Heart right ventricle (tissue), 16 donors: ENCODE measurements at regions of chr15 and their contacts with region 1.

Region 1: DNA sequence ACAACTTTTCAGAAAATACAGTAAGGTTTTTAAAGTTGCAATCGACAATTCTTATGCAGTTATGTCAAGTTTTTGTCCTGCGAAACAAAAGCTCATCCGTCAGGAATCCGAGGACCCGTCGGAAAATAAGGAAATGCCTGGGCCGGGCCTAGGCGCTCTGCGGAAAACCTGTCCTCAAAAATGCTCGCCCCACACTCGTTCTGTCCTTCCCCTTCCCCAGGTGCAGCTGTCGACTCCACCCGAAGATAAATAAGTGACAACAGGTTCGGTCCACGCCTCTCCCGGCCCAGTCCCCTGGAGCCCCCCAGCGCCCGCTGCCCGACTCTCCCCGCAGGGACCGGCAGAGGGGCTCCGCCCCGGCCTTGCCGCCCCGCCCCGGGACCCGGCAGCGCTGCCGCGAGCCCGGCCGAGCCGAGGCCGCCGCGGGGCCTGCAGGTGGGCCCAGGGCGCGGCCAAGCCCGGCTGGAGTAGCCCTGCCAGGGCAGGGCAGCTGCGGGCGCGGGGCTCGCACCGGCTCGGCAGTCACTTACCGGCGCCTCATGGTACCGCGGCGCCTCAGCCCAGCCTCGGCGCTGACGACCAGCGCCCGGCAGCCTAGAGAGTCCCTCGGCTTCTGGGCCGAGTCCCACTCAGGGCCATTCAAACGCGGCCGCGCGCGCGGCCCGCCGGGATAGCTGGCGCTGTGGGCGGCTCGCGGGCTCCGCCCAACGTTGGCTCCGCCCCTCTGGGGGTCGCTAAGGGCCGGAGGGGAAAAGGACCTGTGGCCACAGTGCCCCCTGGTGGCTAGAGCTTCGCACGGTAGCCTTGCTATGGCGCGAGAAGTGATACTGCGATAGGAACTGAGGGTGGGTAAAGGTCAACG is at the start of gene KATNBL1:
- DNase-seq: peak; percentile 97 to 99
- ATAC-seq: peak; percentile 99 to 100 (median 100)
- H3K4me3 ChIP-seq: peak within 1 kb of the TSS; percentile 46 to 90 (median 68)
- H3K27ac ChIP-seq: peak within 1 kb of the TSS; percentile 5 to 90 (median 82)
- H3K4me1 ChIP-seq: peaks cover 7 to 25% (median 13%) of the 10 kb centered on the region in 9 donors
- H3K27me3 ChIP-seq: no peaks in the 10 kb centered on the region
- CTCF ChIP-seq: peak; percentile 92 to 98 (median 96)
- total RNA-seq, gene KATNBL1: 11.5 to 20.2 (median 17.4) TPM

Region 2: GRCh38 chr15:33476076-33476475 is 733.6 kb before region 1 on chr15:
- intact Hi-C with region 1: no loop called
- DNase-seq: no peak
- ATAC-seq: no peak
- H3K4me3 ChIP-seq: no peak overlapping the region
- H3K27ac ChIP-seq: no peak overlapping the region
- H3K4me1 ChIP-seq: no peaks in the 10 kb centered on the region
- H3K27me3 ChIP-seq: no peaks in the 10 kb centered on the region
- CTCF ChIP-seq: no peak

Region 3: DNA sequence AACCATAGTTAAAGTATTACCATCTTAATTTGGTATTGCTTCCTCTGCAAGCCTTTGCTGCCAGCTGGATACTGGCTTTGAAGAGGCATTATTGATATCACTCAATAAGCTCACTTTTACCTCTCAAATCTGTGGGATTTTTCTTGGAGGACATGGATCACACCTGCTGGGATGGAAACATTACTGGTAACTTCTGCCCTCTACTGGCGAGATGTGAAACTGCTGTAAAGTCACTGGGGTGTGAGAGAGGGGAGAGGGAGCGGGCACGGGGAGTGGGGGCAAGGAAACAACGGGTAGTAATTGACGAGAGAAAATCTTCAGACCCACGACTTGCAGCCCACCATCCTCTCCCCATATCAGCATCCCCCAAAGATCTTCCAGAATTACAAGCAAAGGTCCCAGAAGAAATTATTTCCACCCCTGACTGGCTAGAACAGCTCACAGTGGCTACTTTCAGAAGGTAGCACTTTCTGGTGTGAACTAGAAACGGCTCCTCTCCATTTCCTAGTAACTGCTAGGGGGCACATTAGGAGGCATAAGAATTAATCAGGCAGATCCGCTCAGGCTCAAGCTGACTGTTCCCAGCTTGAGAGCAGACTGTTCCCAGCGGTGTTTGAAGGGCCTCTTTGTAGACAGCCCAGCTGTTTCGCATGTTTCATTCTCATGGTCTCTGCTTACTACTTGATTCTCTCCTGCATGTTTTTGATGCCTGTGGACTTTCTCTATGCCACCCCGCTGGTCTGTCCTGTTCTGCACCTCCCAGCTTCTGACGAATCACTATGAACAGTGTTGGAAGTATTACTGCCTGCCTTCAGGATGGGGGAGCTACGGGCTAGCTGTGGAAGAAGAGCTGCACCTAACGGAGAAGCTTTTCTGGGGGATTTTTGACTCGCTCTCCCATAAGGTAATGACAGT is 471.7 kb before region 1 on chr15:
- intact Hi-C with region 1: no loop called
- DNase-seq: peak in 1 of 2 donors; percentile 14
- ATAC-seq: peak in 2 of 8 donors; percentile 55 to 59
- H3K4me3 ChIP-seq: no peak overlapping the region
- H3K27ac ChIP-seq: no peak overlapping the region
- H3K4me1 ChIP-seq: peaks cover 0 to 5% (median 0%) of the 10 kb centered on the region in 9 donors
- H3K27me3 ChIP-seq: peaks cover 0 to 6% (median 0%) of the 10 kb centered on the region in 7 donors
- CTCF ChIP-seq: peak; percentile 49 to 79 (median 70)

Region 4: GRCh38 chr15:34056936-34057335 is 152.7 kb before region 1 on chr15:
- intact Hi-C with region 1: loop called (anchors 1 to 5 kb)
- DNase-seq: no peak
- ATAC-seq: no peak
- H3K4me3 ChIP-seq: no peak overlapping the region
- H3K27ac ChIP-seq: peak overlapping the region in 4 of 10 donors; percentile 29 to 70 (median 45)
- H3K4me1 ChIP-seq: peaks cover 0 to 9% (median 0%) of the 10 kb centered on the region in 9 donors
- H3K27me3 ChIP-seq: no peaks in the 10 kb centered on the region
- CTCF ChIP-seq: no peak

Region 5: GRCh38 chr15:34065941-34066340 is 143.7 kb before region 1 on chr15:
- intact Hi-C with region 1: loop called (anchors 1 to 5 kb)
- DNase-seq: no peak
- ATAC-seq: no peak
- H3K4me3 ChIP-seq: no peak overlapping the region
- H3K27ac ChIP-seq: no peak overlapping the region
- H3K4me1 ChIP-seq: peaks cover 0 to 6% (median 0%) of the 10 kb centered on the region in 9 donors
- H3K27me3 ChIP-seq: no peaks in the 10 kb centered on the region
- CTCF ChIP-seq: no peak

Region 6: DNA sequence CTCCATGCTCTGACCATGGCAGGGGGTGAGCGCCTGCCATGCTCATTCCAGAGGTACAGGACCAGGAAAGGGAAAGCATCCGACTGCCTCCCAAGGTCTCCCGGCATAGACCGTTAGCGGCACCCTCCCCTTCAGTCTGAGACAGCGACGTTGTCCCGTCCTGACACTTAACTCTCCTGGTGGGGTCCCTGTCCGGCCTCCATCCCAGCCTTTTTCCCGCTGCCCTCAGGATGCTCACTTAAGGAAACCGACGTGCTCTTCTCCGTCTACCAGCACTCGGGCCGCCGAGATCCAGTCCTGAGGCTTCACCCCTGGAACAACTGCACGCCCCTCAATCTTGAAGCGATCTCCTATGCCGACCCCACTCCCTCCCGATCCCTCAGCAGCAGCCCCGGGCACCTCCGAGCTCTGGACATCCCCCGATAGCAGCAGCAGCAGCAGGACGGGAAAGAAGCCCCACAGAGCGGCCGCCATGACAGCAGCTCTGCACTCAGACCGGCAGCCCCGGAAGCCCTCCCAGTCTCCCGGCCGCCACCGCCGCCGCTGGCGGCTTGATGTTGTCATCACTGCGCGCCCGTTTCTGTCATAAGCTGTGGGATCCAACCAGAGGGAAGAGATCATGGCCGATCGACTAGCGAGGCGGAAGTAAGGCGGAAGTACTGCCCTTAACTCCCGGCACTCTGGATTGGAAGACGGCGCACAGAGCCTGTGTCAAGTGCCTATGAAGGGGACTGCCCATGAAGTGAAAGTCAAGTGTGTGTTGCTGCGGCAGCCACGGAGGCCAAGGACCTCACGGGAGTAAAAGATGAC is 108.1 kb before region 1 on chr15 and contains the starts of genes EMC7 and PGBD4:
- intact Hi-C with region 1: loop called in 3 of 10 experiments (anchors 5 kb)
- DNase-seq: peak; percentile 98 to 99
- ATAC-seq: peak; percentile 99 to 100 (median 100)
- H3K4me3 ChIP-seq: peak within 1 kb of the TSS; percentile 63 to 98 (median 86)
- H3K27ac ChIP-seq: peak within 1 kb of the TSS; percentile 62 to 93 (median 84)
- H3K4me1 ChIP-seq: peaks cover 3 to 43% (median 31%) of the 10 kb centered on the region in 9 donors
- H3K27me3 ChIP-seq: no peaks in the 10 kb centered on the region
- CTCF ChIP-seq: no peak
- total RNA-seq, gene EMC7: 49.9 to 110 (median 61.4) TPM
- total RNA-seq, gene PGBD4: 1.2 to 2.5 (median 1.9) TPM

Region 7: DNA sequence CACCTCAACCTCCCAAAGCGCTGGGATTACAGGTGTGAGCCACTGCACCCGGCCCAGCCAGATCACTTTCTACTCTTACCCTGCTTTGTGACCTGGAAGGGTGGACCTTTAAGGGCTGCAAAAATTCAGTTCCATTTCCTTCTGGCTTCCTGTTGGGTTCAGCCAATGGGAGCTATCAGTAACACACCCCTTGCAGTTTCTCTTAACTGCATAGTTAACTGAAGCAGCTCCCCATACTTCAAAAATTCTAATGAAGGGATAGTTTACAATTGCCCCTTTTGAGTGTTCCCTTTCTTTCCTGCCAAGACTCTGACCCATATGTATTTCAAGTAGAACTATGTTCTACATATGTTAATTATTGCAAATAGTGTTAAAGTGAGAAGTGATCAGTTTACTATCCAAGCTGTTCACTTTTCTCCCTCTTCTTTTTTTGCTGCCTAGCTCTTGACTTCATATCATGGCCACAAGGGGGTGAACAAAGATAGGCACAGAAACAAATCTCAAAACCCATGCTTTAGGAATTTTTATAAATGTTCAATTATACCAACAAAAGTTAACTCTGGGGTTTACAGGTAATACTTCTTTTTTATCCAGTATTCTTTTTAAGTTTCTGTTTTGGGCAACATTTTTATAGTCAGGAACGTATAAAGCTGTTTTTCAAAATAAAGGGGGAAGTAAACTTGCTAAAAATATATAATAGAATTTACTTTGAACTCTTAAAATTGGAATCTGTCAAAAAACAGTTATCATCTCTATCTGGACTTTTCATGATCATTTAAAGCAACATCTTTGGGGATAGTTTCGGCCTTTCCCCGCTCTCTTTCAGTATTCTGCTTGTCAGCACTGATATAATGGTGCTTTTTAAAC is 99.6 kb before region 1 on chr15:
- intact Hi-C with region 1: loop called in 3 of 10 experiments (anchors 5 to 10 kb)
- DNase-seq: no peak
- ATAC-seq: no peak
- H3K4me3 ChIP-seq: no peak overlapping the region
- H3K27ac ChIP-seq: no peak overlapping the region
- H3K4me1 ChIP-seq: no peaks in the 10 kb centered on the region
- H3K27me3 ChIP-seq: peaks cover 0 to 17% (median 0%) of the 10 kb centered on the region in 7 donors
- CTCF ChIP-seq: peak in 7 of 9 donors; percentile 37 to 56 (median 43)

Region 8: GRCh38 chr15:34147371-34148140 is 62.1 kb before region 1 on chr15:
- intact Hi-C with region 1: loop called in 1 of 10 experiments (anchors 10 kb)
- DNase-seq: no peak
- ATAC-seq: no peak
- H3K4me3 ChIP-seq: no peak overlapping the region
- H3K27ac ChIP-seq: no peak overlapping the region
- H3K4me1 ChIP-seq: no peaks in the 10 kb centered on the region
- H3K27me3 ChIP-seq: no peaks in the 10 kb centered on the region
- CTCF ChIP-seq: no peak

Region 9: DNA sequence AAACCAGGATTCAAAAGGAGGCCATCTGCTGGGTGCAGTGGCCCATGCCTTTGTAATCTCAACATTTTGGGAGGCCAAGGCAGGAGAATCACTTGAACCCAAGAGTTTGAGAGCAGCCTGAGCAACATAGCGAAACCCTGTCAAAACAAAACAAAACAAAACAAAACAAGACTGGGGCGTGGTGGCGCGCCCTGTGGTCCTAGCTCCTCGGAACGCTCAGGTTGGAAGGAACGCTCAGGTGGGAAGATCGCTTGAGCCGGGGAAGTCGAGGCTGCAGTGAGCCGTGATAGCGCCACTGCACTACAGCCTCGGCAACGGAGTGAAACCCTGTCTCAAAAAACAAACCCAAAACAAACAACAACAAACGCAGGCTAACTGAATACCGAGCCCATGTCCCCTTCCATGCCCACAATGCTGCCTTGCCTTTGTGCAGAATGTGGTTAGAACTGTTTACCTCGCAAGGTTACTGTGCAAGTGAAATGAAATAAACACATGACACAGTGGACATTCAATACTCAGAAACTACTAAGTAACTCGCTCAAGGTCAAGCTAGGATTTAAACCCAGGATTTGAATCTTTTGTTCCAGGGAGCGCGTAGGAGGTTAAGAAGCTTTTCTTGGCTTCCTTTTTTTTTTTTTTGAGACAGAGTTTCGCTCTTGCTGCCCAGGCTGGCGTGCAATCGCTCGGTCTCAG is 14.4 kb after region 1 on chr15:
- intact Hi-C with region 1: loop called in 1 of 10 experiments (anchors 1 kb)
- DNase-seq: peak in 1 of 2 donors; percentile 5
- ATAC-seq: peak in 7 of 8 donors; percentile 4 to 44 (median 17)
- H3K4me3 ChIP-seq: peak overlapping the region; percentile 62 to 94 (median 82)
- H3K27ac ChIP-seq: peak overlapping the region; percentile 76 to 97 (median 94)
- H3K4me1 ChIP-seq: peaks cover 3 to 26% (median 19%) of the 10 kb centered on the region in 9 donors
- H3K27me3 ChIP-seq: no peaks in the 10 kb centered on the region
- CTCF ChIP-seq: no peak